Panc1 (cell line): ENCODE measurements at regions of chr7 and their contacts with region 1.

Region 1: GRCh38 chr7:151245360-151246101 is 3.0 kb downstream of the SMARCD3 start:
- DNase-seq: no peak
- ATAC-seq: peak; percentile 33
- H3K4me3 ChIP-seq: peak overlapping the region; percentile 32 to 44
- H3K27ac ChIP-seq: no peak overlapping the region
- H3K4me1 ChIP-seq: peaks cover 37% of the 10 kb centered on the region
- H3K27me3 ChIP-seq: no peaks in the 10 kb centered on the region
- CTCF ChIP-seq: peak; percentile 97

Region 2: GRCh38 chr7:150317748-150318444 is 927.6 kb before region 1 on chr7:
- CTCF ChIA-PET with region 1: no interaction called
- POLR2A ChIA-PET with region 1: interaction called, 11 read pairs
- in situ Hi-C with region 1: no loop called
- intact Hi-C with region 1: no loop called
- DNase-seq: no peak
- ATAC-seq: no peak
- H3K4me3 ChIP-seq: no peak overlapping the region
- H3K27ac ChIP-seq: no peak overlapping the region
- H3K4me1 ChIP-seq: peaks cover 14% of the 10 kb centered on the region
- H3K27me3 ChIP-seq: no peaks in the 10 kb centered on the region
- CTCF ChIP-seq: no peak

Region 3: DNA sequence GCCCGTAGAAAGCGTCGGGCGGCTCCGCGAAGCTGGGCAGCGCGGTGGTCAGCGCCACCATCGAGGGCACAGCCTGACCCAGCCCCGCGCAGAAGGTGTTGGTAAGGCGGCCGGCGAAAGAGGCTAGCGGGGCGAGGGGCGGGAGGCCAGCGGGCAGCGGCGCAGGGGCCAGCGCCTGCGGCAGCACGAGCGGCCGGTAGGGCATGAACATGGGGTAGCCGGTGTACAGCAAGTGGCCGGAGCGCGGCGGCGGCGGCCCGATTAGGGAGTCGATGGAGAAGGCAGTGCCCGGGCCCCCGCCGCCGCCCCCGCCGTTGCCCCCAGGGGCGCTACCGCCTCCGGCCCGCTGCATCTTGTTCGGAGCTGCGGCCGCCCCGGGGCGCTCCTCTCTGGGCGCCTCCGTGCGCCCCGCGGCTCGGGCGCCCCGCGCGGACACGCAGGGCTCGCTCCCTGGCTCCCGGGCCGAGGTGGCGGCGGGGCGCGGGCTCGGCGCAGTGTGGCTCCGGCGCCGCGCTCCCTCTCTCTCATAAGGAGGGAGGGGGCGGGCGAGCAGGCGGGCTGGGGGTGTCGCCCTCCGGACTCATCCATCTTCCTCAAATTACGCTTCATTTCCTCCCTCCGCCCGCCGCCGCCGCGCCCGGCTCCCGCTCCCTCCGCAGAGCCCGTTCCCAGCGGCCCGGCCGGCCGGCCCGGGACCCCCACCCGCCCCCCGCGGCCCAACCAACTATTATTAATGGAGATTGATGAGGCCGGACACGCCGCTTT is 78.2 kb before region 1 on chr7 and contains the start of gene GBX1:
- CTCF ChIA-PET with region 1: interaction called, 14 read pairs
- POLR2A ChIA-PET with region 1: no interaction called
- in situ Hi-C with region 1: no loop called
- intact Hi-C with region 1: no loop called
- DNase-seq: no peak
- ATAC-seq: peak; percentile 68
- H3K4me3 ChIP-seq: peak within 1 kb of the TSS; percentile 37 to 46
- H3K27ac ChIP-seq: no peak within 1 kb of the TSS
- H3K4me1 ChIP-seq: 0 out of 2 replicates have a peak, but pooled peaks cover 4% of the 10 kb centered on the region
- H3K27me3 ChIP-seq: peaks cover 40% of the 10 kb centered on the region
- CTCF ChIP-seq: no peak; the same call in 1 of the 2 replicates
- total RNA-seq, gene GBX1: not detected

Region 4: GRCh38 chr7:151814400-151815009 is 569.0 kb after region 1 on chr7:
- CTCF ChIA-PET with region 1: no interaction called
- POLR2A ChIA-PET with region 1: no interaction called
- in situ Hi-C with region 1: no loop called
- intact Hi-C with region 1: no loop called
- DNase-seq: no peak
- ATAC-seq: no peak; the same call in 1 of the 2 replicates
- H3K4me3 ChIP-seq: no peak overlapping the region
- H3K27ac ChIP-seq: no peak overlapping the region
- H3K4me1 ChIP-seq: no peaks in the 10 kb centered on the region
- H3K27me3 ChIP-seq: no peaks in the 10 kb centered on the region
- CTCF ChIP-seq: no peak